Panc1 (cell line): ENCODE measurements at regions of chr22 and their contacts with region 1.

Region 1: GRCh38 chr22:43172191-43172590 is 14.7 kb downstream of the TTLL12 start:
- DNase-seq: no peak
- ATAC-seq: no peak
- H3K4me3 ChIP-seq: no peak overlapping the region
- H3K27ac ChIP-seq: no peak overlapping the region
- H3K4me1 ChIP-seq: no peaks in the 10 kb centered on the region
- H3K27me3 ChIP-seq: no peaks in the 10 kb centered on the region
- CTCF ChIP-seq: no peak

Region 2: DNA sequence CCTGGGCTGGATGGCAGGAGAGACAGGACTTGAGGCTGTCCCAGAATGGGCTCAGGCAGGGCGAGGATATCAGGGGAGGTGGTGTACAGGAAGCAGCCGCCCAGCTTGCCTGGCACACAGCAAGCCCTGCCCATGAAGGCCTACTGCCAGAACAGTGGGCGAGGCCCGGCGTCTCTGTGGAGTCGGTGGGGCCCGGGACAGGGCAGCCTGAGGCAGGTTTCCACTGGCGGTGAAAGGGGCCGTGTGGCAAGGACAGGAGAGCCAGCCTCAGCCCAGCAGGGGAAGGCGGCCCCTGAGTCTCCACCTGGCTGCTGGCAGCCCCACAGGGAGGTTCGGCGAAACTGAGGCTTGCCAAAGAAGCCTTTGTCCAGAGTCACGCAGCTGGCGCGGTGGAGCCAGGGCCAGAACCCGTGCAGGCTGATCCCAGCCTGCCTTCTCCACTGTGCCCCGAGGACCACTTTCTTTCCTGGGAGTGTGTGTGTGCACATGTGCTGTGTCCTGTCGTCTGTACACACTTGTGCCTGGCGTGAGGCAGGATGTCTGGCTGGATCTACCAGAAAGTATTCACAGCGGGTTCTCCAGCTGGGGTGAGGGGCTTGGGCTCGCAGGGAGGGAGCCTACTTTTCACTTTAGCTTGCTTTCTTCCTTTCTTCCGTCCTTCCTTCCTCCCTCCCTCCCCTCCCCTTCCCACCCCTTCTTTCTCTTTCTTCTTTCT is 19.7 kb before region 1 on chr22:
- CTCF ChIA-PET with region 1: no interaction called
- POLR2A ChIA-PET with region 1: interaction called, 11 read pairs
- in situ Hi-C with region 1: no loop called
- intact Hi-C with region 1: no loop called
- DNase-seq: no peak
- ATAC-seq: peak; percentile 82
- H3K4me3 ChIP-seq: peak overlapping the region; percentile 55 to 62
- H3K27ac ChIP-seq: peak overlapping the region; percentile 88
- H3K4me1 ChIP-seq: peaks cover 6% of the 10 kb centered on the region; the same call in 1 of the 2 replicates
- H3K27me3 ChIP-seq: no peaks in the 10 kb centered on the region
- CTCF ChIP-seq: no peak